HepG2 (cell line): ENCODE measurements at regions of chr1 and their contacts with region 1.

Region 1: DNA sequence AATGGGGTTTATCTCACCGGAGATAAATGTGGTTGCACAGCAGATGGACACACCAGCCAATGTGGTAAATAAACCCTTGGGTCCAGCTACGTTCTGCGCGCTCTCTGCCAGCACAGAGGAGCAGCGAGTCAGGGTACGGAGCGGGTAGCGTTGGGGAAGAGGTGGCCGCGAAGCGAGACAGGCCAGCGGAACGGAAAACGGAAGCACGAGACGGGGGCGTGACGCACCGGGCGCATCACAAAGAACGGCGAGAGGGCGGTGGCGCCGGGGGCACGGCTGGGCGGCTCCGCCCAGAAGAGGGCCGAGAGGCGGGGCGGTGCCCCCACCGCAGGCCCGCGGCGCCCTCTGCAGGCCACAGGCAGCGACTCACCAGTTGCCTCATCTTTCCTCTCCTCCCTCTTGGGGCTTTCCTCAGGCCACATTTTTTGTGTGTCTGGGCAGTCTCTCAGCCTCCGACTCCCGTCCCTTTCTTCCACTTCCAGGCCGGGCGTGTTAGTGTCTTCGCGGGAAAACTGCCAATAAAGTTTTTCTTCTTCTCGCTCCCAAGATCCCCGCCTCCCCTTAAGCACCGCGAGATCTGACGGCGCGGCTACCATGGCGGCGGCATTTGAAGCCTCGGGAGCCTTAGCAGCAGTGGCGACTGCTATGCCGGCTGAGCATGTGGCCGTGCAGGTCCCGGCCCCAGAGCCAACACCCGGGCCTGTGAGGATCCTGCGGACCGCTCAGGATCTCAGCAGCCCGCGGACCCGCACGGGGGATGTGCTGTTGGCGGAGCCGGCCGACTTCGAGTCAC is at the start of gene DDX20:
- DNase-seq: peak; percentile 94
- ATAC-seq: peak; percentile 94
- H3K4me3 ChIP-seq: peak within 1 kb of the TSS; percentile 80 to 96 (median 87)
- H3K27ac ChIP-seq: peak within 1 kb of the TSS; percentile 83
- H3K4me1 ChIP-seq: peaks cover 46% of the 10 kb centered on the region
- H3K27me3 ChIP-seq: no peaks in the 10 kb centered on the region; a peak in 1 of 5 replicates
- CTCF ChIP-seq: peak; percentile 88
- EP300 ChIP-seq: peak; percentile 17 to 26; a peak in 1 of 4 replicates
- POLR2A ChIP-seq: peak; percentile 71 to 82
- RAD21 ChIP-seq: peak; percentile 70
- total RNA-seq, gene DDX20: 14.3 and 20.0 TPM in 2 replicates

Region 2: GRCh38 chr1:111704776-111705175 is 50.8 kb before region 1 on chr1:
- CTCF ChIA-PET with region 1: no interaction called
- POLR2A ChIA-PET with region 1: no interaction called
- in situ Hi-C with region 1: no loop called
- intact Hi-C with region 1: no loop called
- DNase-seq: no peak
- ATAC-seq: no peak
- H3K4me3 ChIP-seq: no peak overlapping the region
- H3K27ac ChIP-seq: no peak overlapping the region
- H3K4me1 ChIP-seq: no peaks in the 10 kb centered on the region
- H3K27me3 ChIP-seq: no peaks in the 10 kb centered on the region
- CTCF ChIP-seq: no peak
- EP300 ChIP-seq: no peak
- POLR2A ChIP-seq: no peak
- RAD21 ChIP-seq: no peak

Region 3: DNA sequence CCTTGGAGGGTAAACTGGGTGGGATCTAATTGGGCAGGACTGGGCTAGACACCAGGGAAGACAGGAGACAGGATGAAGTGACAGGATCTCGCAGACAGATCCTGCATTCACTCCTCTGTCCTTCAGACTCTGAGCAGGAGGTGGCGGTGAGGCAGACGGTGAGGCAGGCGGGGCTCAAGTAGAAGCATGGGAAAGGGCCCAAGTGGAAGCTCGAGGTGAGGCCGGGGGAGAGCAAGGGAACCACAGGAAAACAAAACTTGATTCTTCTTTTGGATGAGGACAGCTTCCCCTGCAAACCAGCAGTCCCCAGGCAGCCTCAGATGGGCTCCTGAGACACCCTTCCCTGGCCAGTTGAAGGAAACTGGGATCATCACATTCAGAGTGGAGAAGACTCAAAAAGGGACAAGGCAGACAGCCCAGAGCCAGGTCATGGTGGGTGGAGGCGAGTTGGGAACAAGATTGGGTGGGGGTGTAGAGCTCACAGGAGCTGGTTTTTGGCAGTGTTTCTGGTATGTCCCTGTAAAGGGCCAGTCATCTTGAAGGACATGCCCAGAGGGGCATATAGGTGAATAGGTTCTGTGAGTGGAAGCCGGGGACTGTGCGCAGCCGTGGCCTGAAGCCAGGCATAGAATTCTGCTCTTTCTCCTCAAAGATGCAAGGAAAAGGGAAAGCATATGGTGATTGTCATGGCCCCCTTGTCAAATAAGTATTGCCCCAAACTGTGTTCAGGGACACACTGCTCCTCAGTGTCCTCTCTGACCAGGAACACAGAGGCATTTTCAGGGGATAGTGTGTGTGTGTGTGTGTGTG is 34.3 kb before region 1 on chr1:
- CTCF ChIA-PET with region 1: interaction called, 19 read pairs
- POLR2A ChIA-PET with region 1: no interaction called
- in situ Hi-C with region 1: loop called (anchors 5 kb)
- intact Hi-C with region 1: no loop called
- DNase-seq: no peak
- ATAC-seq: peak; percentile 31
- H3K4me3 ChIP-seq: no peak overlapping the region
- H3K27ac ChIP-seq: no peak overlapping the region
- H3K4me1 ChIP-seq: peaks cover 59% of the 10 kb centered on the region
- H3K27me3 ChIP-seq: no peaks in the 10 kb centered on the region
- CTCF ChIP-seq: no peak
- EP300 ChIP-seq: no peak
- POLR2A ChIP-seq: no peak
- RAD21 ChIP-seq: no peak

Region 4: GRCh38 chr1:111739194-111739924 is 16.2 kb before region 1 on chr1 and contains the start of gene INKA2:
- CTCF ChIA-PET with region 1: no interaction called
- POLR2A ChIA-PET with region 1: interaction called, 22 read pairs
- in situ Hi-C with region 1: no loop called
- intact Hi-C with region 1: no loop called
- DNase-seq: peak; percentile 83
- ATAC-seq: peak; percentile 90
- H3K4me3 ChIP-seq: peak within 1 kb of the TSS; percentile 57 to 78 (median 66)
- H3K27ac ChIP-seq: peak within 1 kb of the TSS; percentile 75
- H3K4me1 ChIP-seq: peaks cover 71% of the 10 kb centered on the region
- H3K27me3 ChIP-seq: peaks cover 0 to 5% of the 10 kb centered on the region in 2 experiments; a peak in 1 of 5 replicates
- CTCF ChIP-seq: no peak
- EP300 ChIP-seq: 0 out of 4 replicates have a peak, but pooled peaks of 1 of the 2 experiments have one; percentile 5
- POLR2A ChIP-seq: peak; percentile 61 to 75; a peak in 3 of 4 replicates
- RAD21 ChIP-seq: no peak
- total RNA-seq, gene INKA2: 4.6 and 6.1 TPM in 2 replicates

Region 5: GRCh38 chr1:111769517-111770146 is 14.1 kb after region 1 on chr1:
- CTCF ChIA-PET with region 1: no interaction called
- POLR2A ChIA-PET with region 1: interaction called, 4 read pairs
- in situ Hi-C with region 1: no loop called
- intact Hi-C with region 1: loop called (anchors 1 kb)
- DNase-seq: peak; percentile 65
- ATAC-seq: no peak
- H3K4me3 ChIP-seq: no peak overlapping the region
- H3K27ac ChIP-seq: no peak overlapping the region
- H3K4me1 ChIP-seq: peaks cover 12% of the 10 kb centered on the region; the same call in 1 of the 2 replicates
- H3K27me3 ChIP-seq: no peaks in the 10 kb centered on the region
- CTCF ChIP-seq: peak; percentile 78
- EP300 ChIP-seq: no peak
- POLR2A ChIP-seq: no peak
- RAD21 ChIP-seq: peak; percentile 47; the same call in 1 of the 2 replicates

Region 6: DNA sequence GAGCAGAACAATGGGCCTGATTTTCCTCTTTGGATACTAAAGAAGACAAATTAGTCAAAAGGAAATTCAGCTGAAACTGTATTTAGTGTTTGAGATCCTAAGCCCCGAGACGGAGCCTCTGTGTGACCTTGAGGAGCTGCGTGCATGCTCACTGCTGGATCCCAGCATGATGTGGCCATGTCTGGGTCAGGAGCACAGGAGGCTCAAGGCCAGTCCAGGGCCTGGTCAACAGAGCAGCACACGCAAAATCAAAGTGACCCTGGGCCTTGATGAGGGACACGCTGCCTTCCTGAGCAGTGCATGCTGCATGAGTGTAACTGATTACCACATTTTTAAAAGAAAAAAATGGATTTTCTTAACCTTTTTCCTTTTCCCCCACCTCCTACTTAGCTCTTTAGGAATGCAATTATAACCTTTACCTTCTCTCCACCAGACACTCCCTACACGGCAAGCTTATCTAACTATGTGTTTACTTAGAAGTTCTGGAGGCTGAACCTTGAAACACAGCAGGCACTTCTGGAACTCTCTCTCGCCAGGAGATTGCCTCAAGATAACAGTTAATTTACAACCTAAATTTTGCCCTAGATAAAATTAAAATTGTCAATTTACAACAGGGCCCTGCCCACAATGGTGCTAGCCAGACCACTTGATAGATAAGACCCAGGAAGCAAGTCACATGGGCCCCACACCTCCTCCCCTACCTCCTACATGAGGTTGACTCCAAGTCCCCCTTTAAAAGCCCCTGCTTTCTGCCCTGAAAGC is 1462.1 kb after region 1 on chr1:
- CTCF ChIA-PET with region 1: no interaction called
- POLR2A ChIA-PET with region 1: no interaction called
- in situ Hi-C with region 1: no loop called
- intact Hi-C with region 1: no loop called
- DNase-seq: peak; percentile 35
- ATAC-seq: peak; percentile 93
- H3K4me3 ChIP-seq: peak overlapping the region in 1 of 3 experiments; percentile 27; a peak in 1 of 6 replicates
- H3K27ac ChIP-seq: no peak overlapping the region
- H3K4me1 ChIP-seq: peaks cover 33% of the 10 kb centered on the region
- H3K27me3 ChIP-seq: no peaks in the 10 kb centered on the region; a peak in 1 of 5 replicates
- CTCF ChIP-seq: no peak
- EP300 ChIP-seq: no peak
- POLR2A ChIP-seq: no peak
- RAD21 ChIP-seq: no peak